Tibial artery (tissue), 4 donors: ENCODE measurements at regions of chr9 and their contacts with region 1.

Region 1: GRCh38 chr9:32801530-32801929 is 18.2 kb downstream of the TMEM215 start:
- DNase-seq: no peak
- H3K4me3 ChIP-seq: no peak overlapping the region
- H3K27ac ChIP-seq: no peak overlapping the region
- H3K4me1 ChIP-seq: no peaks in the 10 kb centered on the region
- H3K27me3 ChIP-seq: no peaks in the 10 kb centered on the region
- CTCF ChIP-seq: no peak

Region 2: GRCh38 chr9:32672461-32672860 is 129.1 kb before region 1 on chr9:
- intact Hi-C with region 1: loop called (anchors 10 kb)
- DNase-seq: no peak
- H3K4me3 ChIP-seq: no peak overlapping the region
- H3K27ac ChIP-seq: no peak overlapping the region
- H3K4me1 ChIP-seq: no peaks in the 10 kb centered on the region
- H3K27me3 ChIP-seq: no peaks in the 10 kb centered on the region
- CTCF ChIP-seq: no peak